ENCODE measurements at regions of chr6 and their contacts with region 1.

Region 1: GRCh38 chr6:34610819-34611477 is 54.8 kb upstream of the SPDEF start:
- DNase-seq: no peak
- H3K4me3 ChIP-seq: no peak overlapping the region
- H3K27ac ChIP-seq: peak overlapping the region in 2 of 4 donors; percentile 67 to 72
- H3K4me1 ChIP-seq: peaks cover 6 to 26% (median 12%) of the 10 kb centered on the region in 4 donors
- H3K27me3 ChIP-seq: no peaks in the 10 kb centered on the region
- CTCF ChIP-seq: no peak
- EP300 ChIP-seq: no peak
- POLR2A ChIP-seq: no peak

Region 2: DNA sequence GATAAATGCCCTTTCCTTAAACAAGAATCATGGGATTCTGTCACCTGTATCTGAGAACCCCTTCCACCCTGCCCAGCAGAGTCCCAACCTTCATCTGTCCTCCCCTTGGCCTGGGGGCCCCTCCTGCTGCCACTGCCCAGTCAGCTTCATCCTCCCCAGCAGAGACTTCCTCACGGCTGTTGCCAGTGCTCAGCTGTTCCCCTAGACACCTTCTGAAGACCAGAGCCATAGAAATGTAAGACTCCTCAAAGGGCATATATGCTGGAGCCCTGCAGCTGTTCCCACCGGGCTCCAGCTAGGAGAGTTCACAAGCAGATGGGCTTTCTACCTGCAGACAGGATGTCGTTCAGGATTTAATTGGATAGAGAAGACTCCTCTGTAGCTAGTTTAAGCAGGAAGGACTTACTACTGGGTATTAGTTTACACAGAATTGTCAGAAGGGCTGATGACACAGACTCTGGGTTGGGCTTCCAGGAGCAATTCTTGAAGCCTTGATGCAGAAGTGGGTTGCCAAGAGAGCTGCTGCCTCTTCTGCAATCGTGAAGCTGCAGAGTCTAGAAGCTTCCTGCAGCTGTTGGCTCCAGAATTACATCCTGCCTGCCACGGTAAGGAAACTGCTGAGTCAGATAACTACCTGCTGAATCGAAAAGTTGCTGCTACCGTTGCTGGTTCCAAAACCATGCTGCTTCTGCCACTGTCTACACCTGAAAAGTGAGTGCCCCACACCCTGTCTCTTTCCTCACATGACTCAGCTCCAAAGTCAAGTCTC is 750.1 kb before region 1 on chr6:
- in situ Hi-C with region 1: no loop called
- intact Hi-C with region 1: no loop called
- DNase-seq: peak; percentile 15
- H3K4me3 ChIP-seq: no peak overlapping the region
- H3K27ac ChIP-seq: no peak overlapping the region
- H3K4me1 ChIP-seq: peaks cover 0 to 8% (median 0%) of the 10 kb centered on the region in 4 donors
- H3K27me3 ChIP-seq: no peaks in the 10 kb centered on the region
- CTCF ChIP-seq: no peak
- EP300 ChIP-seq: no peak
- POLR2A ChIP-seq: no peak

Region 3: DNA sequence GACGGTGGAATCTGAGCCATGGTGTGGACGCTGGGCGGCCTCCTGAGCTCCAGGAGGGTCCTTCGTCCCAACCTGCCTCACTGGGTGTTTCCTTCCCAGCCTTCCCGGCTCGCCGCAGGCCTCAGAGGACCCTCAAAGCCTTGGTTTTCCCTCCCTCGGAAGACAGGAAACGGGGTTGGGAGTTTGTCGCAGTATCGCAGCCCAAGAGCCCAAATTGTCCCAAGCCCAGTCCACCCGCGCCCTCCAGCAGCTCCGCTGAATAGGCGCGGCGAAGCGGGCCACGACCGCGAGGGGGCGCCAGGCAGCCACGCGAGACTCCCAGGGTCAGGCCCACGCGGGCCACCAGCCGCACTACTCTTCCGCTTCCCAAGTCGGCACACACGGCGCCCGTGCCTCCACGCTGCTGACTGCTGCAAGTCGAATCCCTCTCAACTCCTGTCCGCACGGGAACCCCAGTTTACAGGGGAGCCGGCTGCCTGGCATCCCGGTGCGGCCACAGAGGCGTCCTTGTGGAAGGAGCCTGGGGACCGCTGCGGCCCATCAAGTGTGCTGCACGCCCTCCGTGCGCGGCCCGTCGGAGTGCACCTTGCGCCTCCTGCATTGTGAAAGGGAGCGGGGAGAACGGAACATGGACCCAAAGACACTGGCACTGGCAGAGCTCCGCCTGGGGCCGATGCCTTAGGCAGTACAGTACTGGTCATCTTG is 414.7 kb before region 1 on chr6:
- in situ Hi-C with region 1: loop called (anchors 25 kb)
- intact Hi-C with region 1: loop called (anchors 5 kb)
- DNase-seq: peak; percentile 89
- H3K4me3 ChIP-seq: peak overlapping the region; percentile 28 to 55 (median 42)
- H3K27ac ChIP-seq: no peak overlapping the region
- H3K4me1 ChIP-seq: peaks cover 0 to 9% (median 4%) of the 10 kb centered on the region in 4 donors
- H3K27me3 ChIP-seq: no peaks in the 10 kb centered on the region
- CTCF ChIP-seq: peak; percentile 95 to 99 (median 95)
- EP300 ChIP-seq: no peak
- POLR2A ChIP-seq: no peak

Region 4: GRCh38 chr6:34202329-34203201 is 408.4 kb before region 1 on chr6:
- in situ Hi-C with region 1: loop called (anchors 25 kb)
- intact Hi-C with region 1: loop called (anchors 5 kb)
- DNase-seq: no peak
- H3K4me3 ChIP-seq: no peak overlapping the region
- H3K27ac ChIP-seq: no peak overlapping the region
- H3K4me1 ChIP-seq: no peaks in the 10 kb centered on the region
- H3K27me3 ChIP-seq: no peaks in the 10 kb centered on the region
- CTCF ChIP-seq: no peak
- EP300 ChIP-seq: no peak
- POLR2A ChIP-seq: no peak

Region 5: GRCh38 chr6:34459899-34460593 is 150.9 kb before region 1 on chr6:
- in situ Hi-C with region 1: loop called in 3 of 4 experiments (anchors 25 kb)
- intact Hi-C with region 1: no loop called
- DNase-seq: peak; percentile 55
- H3K4me3 ChIP-seq: no peak overlapping the region
- H3K27ac ChIP-seq: no peak overlapping the region
- H3K4me1 ChIP-seq: no peaks in the 10 kb centered on the region
- H3K27me3 ChIP-seq: peaks cover 17% of the 10 kb centered on the region
- CTCF ChIP-seq: peak; percentile 52 to 70 (median 66)
- EP300 ChIP-seq: no peak
- POLR2A ChIP-seq: no peak

Region 6: DNA sequence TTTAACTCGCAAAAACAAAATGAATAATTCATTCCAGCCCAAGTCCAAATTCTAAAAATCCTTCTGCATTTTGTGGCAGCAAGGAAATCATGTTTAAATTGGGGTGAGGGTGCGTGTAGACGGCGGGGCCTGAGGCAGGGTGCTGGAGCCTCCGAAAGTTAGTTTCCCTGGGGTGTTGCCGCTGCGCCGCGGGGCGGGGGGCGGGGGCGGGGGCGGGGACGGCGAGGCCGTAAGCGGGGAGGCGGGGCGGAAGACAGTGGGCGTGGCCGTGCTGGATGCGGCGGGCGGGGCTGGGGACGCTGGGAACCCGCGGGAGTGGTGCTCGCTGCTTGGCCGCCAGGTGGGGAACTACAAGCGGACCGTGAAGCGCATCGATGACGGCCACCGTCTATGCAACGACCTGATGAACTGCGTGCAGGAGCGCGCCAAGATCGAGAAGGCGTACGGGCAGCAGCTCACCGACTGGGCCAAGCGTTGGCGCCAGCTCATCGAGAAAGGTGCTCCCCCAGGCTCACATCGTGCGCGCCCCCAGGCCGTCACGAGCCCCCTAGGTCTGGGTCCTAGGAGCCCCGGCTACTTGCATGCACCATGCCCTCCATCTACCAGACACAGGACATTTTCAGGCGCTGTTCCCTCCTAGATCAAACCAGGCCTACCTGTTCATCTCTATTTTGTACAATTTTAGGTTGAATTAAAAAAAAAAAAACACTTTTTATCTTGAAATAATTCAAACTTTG is 83.8 kb before region 1 on chr6:
- in situ Hi-C with region 1: loop called in 1 of 4 experiments (anchors 5 kb)
- intact Hi-C with region 1: loop called (anchors 5 kb)
- DNase-seq: peak; percentile 98
- H3K4me3 ChIP-seq: peak overlapping the region in 1 of 4 donors; percentile 34
- H3K27ac ChIP-seq: peak overlapping the region in 2 of 4 donors; percentile 32 to 59
- H3K4me1 ChIP-seq: peaks cover 0 to 16% (median 14%) of the 10 kb centered on the region in 4 donors
- H3K27me3 ChIP-seq: no peaks in the 10 kb centered on the region
- CTCF ChIP-seq: peak; percentile 68 to 86 (median 75)
- EP300 ChIP-seq: no peak
- POLR2A ChIP-seq: no peak